ENCODE measurements at regions of chr1 and their contacts with region 1.

Region 1: GRCh38 chr1:235160957-235161684 is at the start of gene RBM34:
- DNase-seq: peak; percentile 97
- H3K4me3 Mint-ChIP-seq: peak within 1 kb of the TSS; percentile 84
- H3K27ac Mint-ChIP-seq: peak within 1 kb of the TSS; percentile 95
- H3K4me1 Mint-ChIP-seq: peaks cover 14% of the 10 kb centered on the region
- H3K27me3 Mint-ChIP-seq: no peaks in the 10 kb centered on the region
- CTCF ChIP-seq: no peak
- total RNA-seq, gene RBM34: 150 and 184 TPM in 2 replicates

Region 2: DNA sequence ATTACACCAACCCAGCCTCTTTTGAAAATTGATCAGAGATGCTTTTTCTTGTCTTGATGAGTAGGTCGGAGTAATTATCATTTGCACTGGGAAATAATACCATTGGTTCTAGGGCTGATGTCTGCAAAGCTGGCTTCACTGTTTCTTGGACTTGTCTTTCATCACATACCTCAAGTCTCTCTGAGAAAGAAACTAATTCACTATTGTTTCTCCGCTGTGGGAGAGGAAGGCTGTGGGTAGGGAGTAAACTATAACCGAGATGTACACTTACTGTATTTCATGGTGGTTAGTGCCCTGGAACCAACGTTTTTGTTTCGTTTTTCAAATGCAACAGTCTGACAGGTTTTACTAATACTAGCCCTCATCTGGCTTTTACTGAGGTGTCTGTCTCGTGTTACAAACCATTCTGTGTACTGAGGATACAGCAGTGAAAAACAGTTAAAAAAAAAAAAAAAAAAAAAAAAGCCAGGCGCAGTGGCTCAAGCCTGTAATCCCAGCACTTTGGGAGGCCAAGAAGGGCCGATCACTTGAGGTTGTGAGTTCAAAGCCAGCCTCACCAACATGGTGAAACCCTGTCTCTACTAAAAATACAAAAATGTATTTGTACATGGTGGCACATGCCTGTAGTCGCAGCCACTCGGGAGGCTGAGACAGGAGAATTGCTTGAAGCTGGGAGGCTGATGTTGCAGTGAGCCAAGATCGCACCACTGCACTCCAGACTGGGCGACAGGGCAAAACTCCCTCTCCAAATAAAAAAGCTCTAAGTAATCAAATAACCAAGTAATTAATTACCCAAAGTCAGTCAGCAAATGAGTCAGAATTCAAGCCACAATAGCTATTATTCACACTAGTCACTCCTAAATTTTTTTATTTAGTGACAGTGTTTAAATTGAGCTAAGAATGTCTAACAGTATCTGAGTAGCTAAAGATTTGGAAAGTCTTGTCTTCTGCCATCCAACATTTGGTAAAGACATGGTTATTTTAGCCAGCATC is 55.8 kb before region 1 on chr1:
- CTCF ChIA-PET with region 1: interaction called, 7 read pairs
- POLR2A ChIA-PET with region 1: interaction called, 27 read pairs
- intact Hi-C with region 1: loop called (anchors 1 kb)
- DNase-seq: peak; percentile 51
- H3K4me3 Mint-ChIP-seq: peak overlapping the region; percentile 59
- H3K27ac Mint-ChIP-seq: peak overlapping the region; percentile 33
- H3K4me1 Mint-ChIP-seq: peaks cover 29% of the 10 kb centered on the region
- H3K27me3 Mint-ChIP-seq: no peaks in the 10 kb centered on the region
- CTCF ChIP-seq: no peak

Region 3: DNA sequence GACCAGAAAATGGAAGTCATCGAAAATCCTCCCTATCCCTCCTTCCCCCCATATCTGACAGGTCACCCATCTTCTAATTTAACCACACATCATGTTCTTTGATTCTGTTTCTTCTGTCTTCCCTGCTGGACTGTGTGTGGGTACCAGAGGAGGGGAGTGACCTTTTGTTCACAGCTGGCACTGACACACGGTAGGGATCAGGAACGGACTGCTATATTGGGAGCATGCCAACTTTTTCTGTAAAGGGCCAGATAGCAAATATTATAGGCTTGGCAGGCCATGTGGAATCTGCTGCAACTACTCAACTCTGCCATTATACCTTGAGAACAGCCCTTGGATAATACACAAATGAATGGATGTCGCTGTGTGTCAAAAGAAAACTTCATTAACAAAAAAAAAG is 25.0 kb before region 1 on chr1:
- CTCF ChIA-PET with region 1: interaction called, 6 read pairs
- POLR2A ChIA-PET with region 1: interaction called, 17 read pairs
- intact Hi-C with region 1: no loop called
- DNase-seq: no peak
- H3K4me3 Mint-ChIP-seq: no peak overlapping the region
- H3K27ac Mint-ChIP-seq: no peak overlapping the region
- H3K4me1 Mint-ChIP-seq: no peaks in the 10 kb centered on the region
- H3K27me3 Mint-ChIP-seq: no peaks in the 10 kb centered on the region
- CTCF ChIP-seq: no peak

Region 4: DNA sequence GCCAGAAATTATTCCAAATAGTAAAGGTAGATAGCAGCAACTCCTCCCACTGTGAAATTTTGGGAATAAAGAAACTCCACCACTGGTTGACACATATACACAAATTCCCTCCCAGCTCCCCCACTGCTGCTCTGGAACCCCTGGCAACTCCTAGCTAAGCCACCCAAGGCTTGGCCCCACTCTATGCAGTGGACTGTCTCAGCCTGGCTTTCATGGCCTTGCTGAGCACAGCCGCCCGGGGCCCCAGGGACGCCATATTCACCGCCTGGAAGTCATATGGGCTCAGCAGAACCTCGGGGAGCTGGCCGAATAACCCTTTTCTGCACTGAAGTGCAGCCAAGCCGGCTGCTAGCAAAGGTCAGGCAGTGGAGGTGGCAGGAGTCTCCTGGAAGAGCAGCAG is 15.4 kb after region 1 on chr1:
- CTCF ChIA-PET with region 1: interaction called, 9 read pairs
- POLR2A ChIA-PET with region 1: interaction called, 32 read pairs
- intact Hi-C with region 1: no loop called
- DNase-seq: no peak
- H3K4me3 Mint-ChIP-seq: no peak overlapping the region
- H3K27ac Mint-ChIP-seq: no peak overlapping the region
- H3K4me1 Mint-ChIP-seq: no peaks in the 10 kb centered on the region
- H3K27me3 Mint-ChIP-seq: no peaks in the 10 kb centered on the region
- CTCF ChIP-seq: no peak

Region 5: DNA sequence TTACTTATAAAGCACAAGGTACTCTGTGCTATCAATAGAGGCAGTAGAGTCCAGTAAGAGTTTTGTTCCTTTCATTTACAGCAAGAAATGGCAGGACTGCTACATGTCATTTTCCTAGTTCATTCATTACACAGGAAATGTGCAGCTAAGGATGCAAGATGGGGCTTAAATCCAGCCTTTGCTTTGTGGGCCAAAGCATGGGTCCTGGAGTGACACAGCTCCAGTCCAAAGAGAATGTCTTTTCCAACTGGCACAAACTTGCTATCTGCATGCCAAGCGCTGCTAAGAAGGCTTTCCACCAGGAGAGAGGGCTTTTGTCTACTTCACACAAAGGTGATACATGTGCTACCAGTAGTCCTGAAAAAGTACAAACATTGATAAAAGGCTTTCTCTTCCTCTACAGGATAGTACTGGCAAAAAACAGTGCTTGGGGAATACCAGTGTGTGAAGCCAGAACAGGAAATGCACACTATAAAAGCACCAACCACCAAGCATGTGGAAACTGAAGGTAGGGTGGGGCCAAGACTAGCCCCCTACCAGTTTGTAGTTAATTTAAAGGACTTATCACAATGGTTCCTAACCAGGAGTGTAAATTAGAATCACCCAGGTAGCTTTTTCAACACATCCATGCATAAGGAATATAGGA is 98.1 kb after region 1 on chr1:
- CTCF ChIA-PET with region 1: no interaction called
- POLR2A ChIA-PET with region 1: no interaction called
- intact Hi-C with region 1: no loop called
- DNase-seq: no peak
- H3K4me3 Mint-ChIP-seq: no peak overlapping the region
- H3K27ac Mint-ChIP-seq: no peak overlapping the region
- H3K4me1 Mint-ChIP-seq: peaks cover 7% of the 10 kb centered on the region
- H3K27me3 Mint-ChIP-seq: no peaks in the 10 kb centered on the region
- CTCF ChIP-seq: no peak

Region 6: DNA sequence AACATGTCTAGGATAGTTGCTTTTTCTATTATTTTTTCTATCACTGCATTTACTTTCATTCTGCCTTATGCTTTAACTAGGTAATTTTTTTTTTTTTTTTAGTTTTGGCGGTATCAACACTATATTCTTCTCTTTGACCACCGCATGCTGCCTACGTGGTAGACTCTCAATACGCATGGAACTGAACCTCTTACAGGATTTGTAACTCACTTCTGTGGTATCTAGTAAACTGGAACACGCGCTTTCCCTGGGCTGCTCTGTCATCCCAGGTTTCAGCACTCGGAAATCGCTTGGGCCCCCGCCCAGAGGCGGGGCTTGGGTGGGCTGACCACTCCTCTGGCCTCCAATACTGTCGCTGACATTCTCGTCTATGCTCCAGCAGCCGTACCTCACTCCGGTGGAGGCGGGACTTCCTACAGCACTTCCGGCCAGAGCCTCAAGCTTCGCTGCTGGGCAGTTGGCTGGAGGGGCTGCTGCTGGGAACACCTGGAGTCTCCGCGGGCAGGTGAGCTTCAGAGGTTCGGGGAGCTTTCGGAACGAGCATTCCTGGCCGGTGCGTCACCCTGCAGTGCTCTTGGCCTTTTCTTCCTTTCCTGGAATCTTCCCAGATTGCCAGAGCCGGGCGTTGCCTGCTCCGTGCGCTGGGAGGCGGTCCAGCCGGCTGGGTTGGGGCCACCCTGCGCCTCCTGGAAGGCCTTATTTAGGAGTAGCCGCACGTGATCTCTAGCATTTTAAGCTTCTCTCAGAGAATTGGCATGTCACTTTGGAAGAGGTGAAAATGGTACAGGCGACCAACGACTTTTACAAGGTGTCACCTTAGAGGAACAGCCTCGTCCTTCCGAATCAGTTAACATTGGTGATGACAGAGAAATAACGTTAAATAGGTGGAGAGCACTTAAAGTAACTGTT is 206.1 kb after region 1 on chr1 and contains the start of gene TBCE:
- CTCF ChIA-PET with region 1: no interaction called
- POLR2A ChIA-PET with region 1: interaction called, 12 read pairs
- intact Hi-C with region 1: no loop called
- DNase-seq: peak; percentile 100
- H3K4me3 Mint-ChIP-seq: peak within 1 kb of the TSS; percentile 96
- H3K27ac Mint-ChIP-seq: peak within 1 kb of the TSS; percentile 94
- H3K4me1 Mint-ChIP-seq: peaks cover 26% of the 10 kb centered on the region
- H3K27me3 Mint-ChIP-seq: no peaks in the 10 kb centered on the region
- CTCF ChIP-seq: peak; percentile 16
- total RNA-seq, gene TBCE: 45.6 and 52.5 TPM in 2 replicates

Region 7: GRCh38 chr1:235883261-235883927 is 722.3 kb after region 1 on chr1:
- CTCF ChIA-PET with region 1: no interaction called
- POLR2A ChIA-PET with region 1: no interaction called
- intact Hi-C with region 1: no loop called
- DNase-seq: peak; percentile 98
- H3K4me3 Mint-ChIP-seq: peak overlapping the region; percentile 5
- H3K27ac Mint-ChIP-seq: no peak overlapping the region
- H3K4me1 Mint-ChIP-seq: peaks cover 21% of the 10 kb centered on the region
- H3K27me3 Mint-ChIP-seq: no peaks in the 10 kb centered on the region
- CTCF ChIP-seq: no peak

Measured in MCF 10A (cell line).